Gastrocnemius medialis (tissue), 4 donors: ENCODE measurements at regions of chr9 and their contacts with region 1.

Region 1: GRCh38 chr9:86968258-86968920 is 21.1 kb upstream of the GAS1 start:
- DNase-seq: no peak
- ATAC-seq: no peak
- H3K4me3 ChIP-seq: no peak overlapping the region
- H3K27ac ChIP-seq: no peak overlapping the region
- H3K4me1 ChIP-seq: no peaks in the 10 kb centered on the region
- H3K27me3 ChIP-seq: no peaks in the 10 kb centered on the region
- CTCF ChIP-seq: no peak
- POLR2A ChIP-seq: no peak

Region 2: GRCh38 chr9:86836797-86837196 is 131.6 kb before region 1 on chr9:
- in situ Hi-C with region 1: no loop called
- intact Hi-C with region 1: no loop called
- DNase-seq: no peak
- ATAC-seq: no peak
- H3K4me3 ChIP-seq: no peak overlapping the region
- H3K27ac ChIP-seq: no peak overlapping the region
- H3K4me1 ChIP-seq: no peaks in the 10 kb centered on the region
- H3K27me3 ChIP-seq: no peaks in the 10 kb centered on the region
- CTCF ChIP-seq: no peak
- POLR2A ChIP-seq: no peak

Region 3: GRCh38 chr9:87063871-87064270 is 95.5 kb after region 1 on chr9:
- in situ Hi-C with region 1: loop called in 1 of 4 experiments (anchors 25 kb)
- intact Hi-C with region 1: no loop called
- DNase-seq: no peak
- ATAC-seq: peak in 1 of 2 donors; percentile 30
- H3K4me3 ChIP-seq: no peak overlapping the region
- H3K27ac ChIP-seq: no peak overlapping the region
- H3K4me1 ChIP-seq: peaks cover 3 to 8% of the 10 kb centered on the region in 2 donors
- H3K27me3 ChIP-seq: no peaks in the 10 kb centered on the region
- CTCF ChIP-seq: no peak
- POLR2A ChIP-seq: no peak